Mammary epithelial cell (primary cell): ENCODE measurements at regions of chr19 and their contacts with region 1.

Region 1: DNA sequence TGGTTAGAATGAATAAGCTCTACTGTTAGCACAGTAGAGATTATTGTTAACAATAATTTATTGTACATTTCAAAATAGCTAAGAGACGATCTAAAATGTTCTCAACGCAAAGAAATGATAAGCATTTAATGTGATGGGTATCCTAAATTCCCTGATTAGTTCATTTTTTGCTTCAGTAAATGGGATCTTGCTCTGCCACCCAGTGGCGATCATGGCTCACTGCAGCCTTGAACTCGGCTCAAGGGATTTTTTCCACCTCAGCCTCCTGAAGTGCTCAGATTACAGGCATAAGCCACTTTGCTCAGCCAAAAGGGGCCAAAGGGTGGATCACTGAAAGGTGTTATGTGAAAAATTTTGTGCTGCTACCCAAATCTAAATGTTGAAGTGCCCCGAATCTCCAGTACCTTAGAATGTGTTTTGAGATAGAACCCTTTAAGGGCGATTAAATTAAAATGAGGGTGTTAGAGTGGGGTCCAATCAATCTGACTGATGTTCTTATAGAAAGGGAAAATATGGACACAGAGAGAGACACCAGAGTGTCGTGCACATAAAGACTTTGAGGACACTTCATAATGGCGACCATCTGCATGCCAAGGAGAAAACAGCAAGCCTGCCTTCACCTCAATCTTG is 31.5 kb upstream of the ZNF766 start:
- DNase-seq: peak; percentile 40
- H3K4me3 ChIP-seq: no peak overlapping the region
- H3K27ac ChIP-seq: no peak overlapping the region
- H3K4me1 ChIP-seq: no peaks in the 10 kb centered on the region
- H3K27me3 ChIP-seq: no peaks in the 10 kb centered on the region
- CTCF ChIP-seq: peak; percentile 78 to 87

Region 2: DNA sequence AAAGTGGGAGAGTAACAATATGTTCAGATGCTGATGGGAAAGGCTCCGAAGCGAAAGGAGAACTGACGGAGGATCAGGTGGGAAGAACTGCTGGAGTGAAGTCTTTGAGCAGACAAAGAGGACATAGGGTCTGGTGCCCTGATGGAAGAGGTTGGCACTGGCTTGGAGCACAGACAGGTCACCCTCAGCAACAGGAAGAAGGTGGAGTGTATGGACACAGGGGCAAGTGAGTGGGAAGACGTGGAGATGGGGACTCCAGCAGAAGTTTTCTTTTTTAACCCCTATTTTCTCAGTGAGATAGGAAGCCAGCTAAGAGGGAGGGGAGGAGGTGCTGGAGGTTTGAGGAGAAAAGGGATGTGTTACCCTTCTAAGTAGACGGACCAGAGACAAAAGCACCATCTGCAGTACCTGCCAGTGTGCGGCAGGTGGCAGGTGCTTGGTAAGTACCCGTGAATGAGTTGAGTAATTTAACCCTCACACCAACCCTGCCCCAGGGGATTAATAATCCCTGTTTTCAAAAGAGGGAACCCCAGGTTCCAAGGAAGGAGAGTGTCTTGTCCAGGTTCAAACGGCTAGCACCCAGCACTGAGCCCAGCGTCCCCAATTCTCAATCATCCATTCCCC is 525.3 kb before region 1 on chr19:
- CTCF ChIA-PET with region 1: no interaction called
- dilution Hi-C with region 1: no loop called
- in situ Hi-C with region 1: no loop called
- intact Hi-C with region 1: loop called (anchors 2 kb)
- DNase-seq: peak; percentile 69
- H3K4me3 ChIP-seq: no peak overlapping the region
- H3K27ac ChIP-seq: no peak overlapping the region
- H3K4me1 ChIP-seq: no peaks in the 10 kb centered on the region
- H3K27me3 ChIP-seq: peaks cover 2% of the 10 kb centered on the region
- CTCF ChIP-seq: peak; percentile 80 to 90

Region 3: GRCh38 chr19:51807111-51807701 is 430.7 kb before region 1 on chr19:
- CTCF ChIA-PET with region 1: no interaction called
- dilution Hi-C with region 1: no loop called
- in situ Hi-C with region 1: no loop called
- intact Hi-C with region 1: loop called (anchors 1 kb)
- DNase-seq: peak; percentile 63
- H3K4me3 ChIP-seq: no peak overlapping the region
- H3K27ac ChIP-seq: no peak overlapping the region
- H3K4me1 ChIP-seq: peaks cover 16% of the 10 kb centered on the region
- H3K27me3 ChIP-seq: no peaks in the 10 kb centered on the region
- CTCF ChIP-seq: no peak

Region 4: GRCh38 chr19:51926784-51927742 is 310.8 kb before region 1 on chr19 and contains the start of gene ZNF613:
- CTCF ChIA-PET with region 1: no interaction called
- dilution Hi-C with region 1: no loop called
- in situ Hi-C with region 1: no loop called
- intact Hi-C with region 1: loop called (anchors 1 kb)
- DNase-seq: peak; percentile 92
- H3K4me3 ChIP-seq: peak within 1 kb of the TSS; percentile 53 to 93 (median 78)
- H3K27ac ChIP-seq: peak within 1 kb of the TSS; percentile 65
- H3K4me1 ChIP-seq: no peaks in the 10 kb centered on the region
- H3K27me3 ChIP-seq: no peaks in the 10 kb centered on the region
- CTCF ChIP-seq: peak in 1 of 2 donors; percentile 41
- total RNA-seq, gene ZNF613: 6.0 to 6.6 TPM

Region 5: DNA sequence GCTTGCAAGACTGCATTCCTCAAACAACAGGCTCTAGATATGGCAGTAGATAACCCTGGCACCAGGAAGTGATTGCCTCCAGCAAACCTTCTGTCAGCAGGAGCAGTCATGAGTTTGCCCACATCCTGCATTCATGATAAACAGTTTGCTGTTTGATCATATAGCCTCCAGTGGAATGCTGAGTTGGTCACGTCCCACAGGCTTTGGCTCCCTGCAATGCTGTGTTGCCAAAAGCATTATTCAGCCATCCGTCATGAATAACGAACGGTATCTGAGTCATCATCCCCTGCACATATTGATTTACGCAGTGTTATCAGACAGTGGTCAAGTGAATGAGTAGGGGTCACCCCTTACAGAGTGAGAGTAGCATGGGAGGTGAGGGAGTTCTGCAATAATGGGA is 167.4 kb before region 1 on chr19:
- CTCF ChIA-PET with region 1: no interaction called
- dilution Hi-C with region 1: no loop called
- in situ Hi-C with region 1: no loop called
- intact Hi-C with region 1: no loop called
- DNase-seq: peak; percentile 3
- H3K4me3 ChIP-seq: no peak overlapping the region
- H3K27ac ChIP-seq: no peak overlapping the region
- H3K4me1 ChIP-seq: no peaks in the 10 kb centered on the region
- H3K27me3 ChIP-seq: no peaks in the 10 kb centered on the region
- CTCF ChIP-seq: no peak

Region 6: DNA sequence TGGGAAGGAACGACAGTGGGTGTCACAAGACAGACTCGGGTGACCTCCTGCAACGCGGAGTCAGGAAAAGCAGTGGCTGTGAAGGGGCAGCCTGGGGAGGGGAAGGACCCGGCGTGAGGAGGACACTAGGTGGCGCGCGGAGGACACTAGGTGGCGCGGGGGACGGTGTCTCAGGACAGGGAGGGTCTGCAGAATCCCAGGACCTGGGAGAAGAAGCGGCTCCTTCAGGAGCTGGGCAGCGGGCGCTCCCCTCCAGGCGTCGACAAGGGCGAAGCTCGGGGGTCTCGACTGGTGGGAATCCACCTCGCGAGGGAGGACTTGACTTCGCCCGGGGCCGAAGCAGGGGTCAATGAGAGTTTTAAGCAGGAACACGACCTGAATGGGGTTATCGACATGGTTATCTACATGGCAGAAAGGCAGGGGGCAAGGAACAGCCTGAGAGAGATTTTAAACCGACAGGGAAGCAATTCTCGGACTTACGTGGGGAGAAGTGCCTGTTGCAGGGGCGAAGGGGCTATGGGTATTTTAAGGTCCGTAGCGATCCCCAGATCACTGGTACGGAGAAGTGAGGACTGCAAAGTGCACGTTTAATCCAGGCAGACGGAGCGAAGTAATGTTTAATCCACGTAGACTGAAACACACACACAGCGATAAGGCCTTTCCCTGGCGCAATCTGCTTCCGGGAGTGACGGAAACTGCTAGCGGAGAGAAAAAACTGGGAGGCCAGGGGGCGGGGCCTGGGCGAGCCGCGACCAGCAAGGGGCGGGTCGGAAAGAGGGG is 98.4 kb before region 1 on chr19 and contains the start of gene ZNF616:
- CTCF ChIA-PET with region 1: no interaction called
- dilution Hi-C with region 1: no loop called
- in situ Hi-C with region 1: no loop called
- intact Hi-C with region 1: loop called (anchors 1 kb)
- DNase-seq: peak; percentile 92
- H3K4me3 ChIP-seq: peak within 1 kb of the TSS; percentile 85 to 86 (median 85)
- H3K27ac ChIP-seq: peak within 1 kb of the TSS; percentile 58
- H3K4me1 ChIP-seq: peaks cover 6% of the 10 kb centered on the region
- H3K27me3 ChIP-seq: no peaks in the 10 kb centered on the region
- CTCF ChIP-seq: peak; percentile 45 to 82
- total RNA-seq, gene ZNF616: 9.7 to 10.3 TPM

Region 7: DNA sequence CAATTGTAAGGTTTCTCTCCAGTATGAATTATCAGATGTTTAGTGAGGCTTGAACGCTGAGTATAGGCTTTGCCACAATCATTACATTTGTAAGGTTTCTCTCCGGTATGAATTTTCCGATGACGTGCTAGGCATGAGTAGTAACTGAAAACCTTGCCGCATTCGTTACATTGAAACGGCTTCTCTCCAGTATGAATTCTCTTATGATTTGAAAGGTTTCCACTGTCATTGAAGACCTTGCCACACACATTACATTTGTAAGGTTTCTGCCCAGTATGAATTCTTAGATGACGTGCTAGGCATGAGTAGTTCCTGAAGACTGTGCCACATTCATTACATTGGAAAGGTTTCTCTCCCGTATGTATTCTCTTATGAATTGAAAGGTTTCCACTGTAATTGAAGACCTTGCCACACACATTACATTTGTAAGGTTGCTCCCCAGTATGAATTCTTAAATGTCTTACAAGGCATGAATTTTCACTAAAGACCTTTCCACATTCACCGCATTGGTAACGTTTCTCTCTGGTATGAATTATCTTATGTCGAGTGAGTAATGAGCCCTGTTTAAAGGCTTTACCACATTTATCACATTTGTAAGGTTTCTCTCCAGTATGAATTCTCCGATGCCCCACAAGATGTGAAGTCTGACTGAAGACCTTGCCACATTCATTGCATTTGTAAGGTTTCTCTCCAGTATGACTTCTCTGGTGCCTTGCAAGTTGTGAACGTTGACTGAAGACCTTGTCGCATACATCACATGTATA is 82.1 kb before region 1 on chr19:
- CTCF ChIA-PET with region 1: no interaction called
- dilution Hi-C with region 1: no loop called
- in situ Hi-C with region 1: no loop called
- intact Hi-C with region 1: no loop called
- DNase-seq: no peak
- H3K4me3 ChIP-seq: no peak overlapping the region
- H3K27ac ChIP-seq: no peak overlapping the region
- H3K4me1 ChIP-seq: no peaks in the 10 kb centered on the region
- H3K27me3 ChIP-seq: no peaks in the 10 kb centered on the region
- CTCF ChIP-seq: no peak